Uterus (tissue), 4 donors: ENCODE measurements at regions of chr15 and their contacts with region 1.

Region 1: DNA sequence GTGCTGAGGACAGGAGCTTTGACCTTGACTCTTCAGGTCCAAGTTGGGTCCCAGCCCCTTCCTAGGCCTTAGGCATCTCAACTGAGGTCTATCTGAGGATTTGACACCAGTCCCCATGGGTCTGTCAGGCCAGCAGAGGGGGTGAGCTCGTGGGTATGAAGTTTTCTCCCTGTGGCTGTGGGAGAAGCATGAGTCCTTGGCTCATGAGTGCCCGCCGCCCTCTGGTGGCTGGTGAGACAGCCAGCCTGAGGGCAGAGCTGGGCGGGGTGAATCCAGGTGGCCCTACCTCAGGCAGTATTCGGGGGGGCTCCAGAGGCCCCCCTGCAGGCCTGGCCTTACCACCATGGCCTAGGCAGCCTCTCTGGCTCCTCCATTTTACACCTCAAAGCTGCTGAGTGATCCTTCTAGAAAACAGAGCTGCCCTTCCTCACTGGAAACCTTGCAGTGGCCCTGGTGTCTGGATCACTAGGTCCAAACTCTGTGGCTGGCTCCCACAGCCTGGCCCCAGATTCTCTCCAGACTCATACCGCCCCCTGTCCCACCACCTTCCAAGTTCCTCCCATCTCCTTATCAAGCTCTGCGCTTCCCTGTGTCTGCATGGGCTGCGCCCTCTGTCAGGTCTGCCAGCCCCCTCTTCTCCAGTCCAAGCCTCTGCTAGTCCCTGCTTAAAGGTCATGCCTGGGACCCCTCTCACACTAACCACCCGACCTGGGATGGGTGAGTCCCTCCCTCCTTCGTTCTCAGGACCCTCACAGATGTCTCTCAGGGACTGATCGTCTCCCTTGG is 16.1 kb downstream of the SH2D7 start:
- DNase-seq: peak; percentile 78 to 81
- H3K4me3 ChIP-seq: no peak overlapping the region
- H3K27ac ChIP-seq: no peak overlapping the region
- H3K4me1 ChIP-seq: no peaks in the 10 kb centered on the region
- H3K27me3 ChIP-seq: no peaks in the 10 kb centered on the region
- CTCF ChIP-seq: peak; percentile 90 to 98 (median 97)
- POLR2A ChIP-seq: peak in 1 of 2 donors; percentile 9

Region 2: DNA sequence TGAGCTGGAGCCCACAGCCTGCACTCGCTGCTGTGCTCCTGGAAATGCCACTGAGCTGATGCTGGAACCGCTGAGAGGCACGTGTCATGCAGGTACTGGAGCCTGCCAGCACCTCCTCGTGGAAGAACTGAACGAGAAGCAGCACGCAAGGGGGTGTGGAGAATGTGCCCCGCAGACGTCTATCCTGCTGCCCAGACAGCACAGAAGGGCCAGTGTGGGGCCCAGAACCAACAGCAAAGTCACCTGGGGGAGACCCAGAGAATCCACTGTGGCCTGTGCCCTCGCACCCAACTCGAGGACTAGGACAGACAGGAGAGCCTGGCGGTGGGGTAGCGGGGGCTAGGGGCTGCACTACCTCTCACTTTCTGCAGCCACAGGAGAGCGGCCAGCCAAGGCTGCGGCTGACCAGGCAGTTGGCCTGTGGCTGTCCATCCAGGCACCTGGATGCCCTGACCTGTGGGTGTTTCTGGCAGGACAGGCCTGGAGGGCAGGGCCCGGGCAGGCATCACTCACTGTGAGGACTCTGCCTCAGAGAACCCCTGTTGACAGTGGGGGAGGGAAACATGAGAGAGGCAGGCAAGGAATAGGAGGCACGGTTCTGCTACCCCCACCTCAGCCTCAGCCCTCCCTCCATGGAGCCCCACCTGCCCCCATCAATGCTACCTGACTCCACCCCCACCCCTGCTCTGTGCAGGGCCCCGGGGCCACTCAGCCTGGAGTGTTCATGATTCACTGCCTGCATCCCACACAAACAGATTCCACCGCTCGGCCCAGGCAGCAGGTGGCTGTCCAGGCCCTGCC is 244.0 kb before region 1 on chr15:
- intact Hi-C with region 1: no loop called
- DNase-seq: peak in 1 of 2 donors; percentile 3
- H3K4me3 ChIP-seq: no peak overlapping the region
- H3K27ac ChIP-seq: no peak overlapping the region
- H3K4me1 ChIP-seq: peaks cover 0 to 4% of the 10 kb centered on the region in 2 donors
- H3K27me3 ChIP-seq: no peaks in the 10 kb centered on the region
- CTCF ChIP-seq: no peak
- POLR2A ChIP-seq: no peak

Region 3: GRCh38 chr15:77966540-77967290 is 141.8 kb before region 1 on chr15:
- intact Hi-C with region 1: loop called (anchors 5 kb)
- DNase-seq: peak in 1 of 2 donors; percentile 57
- H3K4me3 ChIP-seq: no peak overlapping the region
- H3K27ac ChIP-seq: no peak overlapping the region
- H3K4me1 ChIP-seq: no peaks in the 10 kb centered on the region
- H3K27me3 ChIP-seq: no peaks in the 10 kb centered on the region
- CTCF ChIP-seq: peak; percentile 76 to 89 (median 86)
- POLR2A ChIP-seq: no peak

Region 4: GRCh38 chr15:78195735-78196201 is 87.3 kb after region 1 on chr15:
- intact Hi-C with region 1: loop called (anchors 5 kb)
- DNase-seq: no peak
- H3K4me3 ChIP-seq: no peak overlapping the region
- H3K27ac ChIP-seq: no peak overlapping the region
- H3K4me1 ChIP-seq: no peaks in the 10 kb centered on the region
- H3K27me3 ChIP-seq: no peaks in the 10 kb centered on the region
- CTCF ChIP-seq: peak; percentile 51 to 76 (median 68)
- POLR2A ChIP-seq: no peak

Region 5: DNA sequence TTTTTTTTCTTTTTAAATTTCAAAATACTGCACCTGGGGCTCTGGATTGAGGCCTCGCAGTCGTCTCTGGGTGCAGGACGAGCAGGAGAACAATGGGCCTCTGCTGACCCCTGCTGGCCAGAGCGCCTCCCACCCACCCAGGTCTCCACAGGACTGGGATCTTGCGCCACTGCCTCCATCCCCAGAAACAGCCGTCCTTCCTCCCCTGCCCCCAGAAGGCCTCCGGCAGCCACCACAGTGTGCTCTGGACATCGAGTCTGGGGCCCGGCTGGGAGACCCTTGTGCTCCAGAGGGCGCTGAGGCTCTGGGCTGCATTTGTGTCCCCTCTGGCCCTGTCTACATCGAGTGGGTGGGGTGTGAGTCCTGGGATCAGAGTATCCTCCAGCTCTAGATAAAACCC is 132.5 kb after region 1 on chr15:
- intact Hi-C with region 1: loop called (anchors 5 kb)
- DNase-seq: peak; percentile 83 to 88
- H3K4me3 ChIP-seq: no peak overlapping the region
- H3K27ac ChIP-seq: no peak overlapping the region
- H3K4me1 ChIP-seq: no peaks in the 10 kb centered on the region
- H3K27me3 ChIP-seq: no peaks in the 10 kb centered on the region
- CTCF ChIP-seq: peak; percentile 84 to 88 (median 86)
- POLR2A ChIP-seq: no peak

Region 6: DNA sequence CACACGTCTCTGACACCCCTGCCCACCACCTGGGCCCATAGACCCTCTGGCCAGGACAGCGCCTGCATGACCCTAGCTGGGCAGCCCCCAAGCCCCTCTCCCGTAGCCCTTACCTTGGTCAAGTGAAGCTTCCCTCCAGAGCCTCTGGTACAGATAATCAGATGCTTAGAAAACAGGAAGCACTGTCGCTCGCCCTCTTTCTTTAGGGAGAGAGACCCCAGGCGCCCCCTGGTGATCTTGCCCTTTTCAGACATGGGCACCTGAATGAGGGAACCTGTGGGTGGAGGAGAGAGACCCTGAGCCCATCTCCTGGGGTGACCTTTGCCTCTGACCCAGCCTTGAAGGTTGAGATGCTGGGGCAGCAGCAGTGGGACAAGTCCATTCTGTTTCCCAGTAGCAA is 916.7 kb after region 1 on chr15:
- intact Hi-C with region 1: no loop called
- DNase-seq: no peak
- H3K4me3 ChIP-seq: no peak overlapping the region
- H3K27ac ChIP-seq: no peak overlapping the region
- H3K4me1 ChIP-seq: no peaks in the 10 kb centered on the region
- H3K27me3 ChIP-seq: no peaks in the 10 kb centered on the region
- CTCF ChIP-seq: no peak
- POLR2A ChIP-seq: no peak